Right ventricle myocardium inferior (tissue), 1 donor: ENCODE measurements at regions of chrX and their contacts with region 1.

Region 1: DNA sequence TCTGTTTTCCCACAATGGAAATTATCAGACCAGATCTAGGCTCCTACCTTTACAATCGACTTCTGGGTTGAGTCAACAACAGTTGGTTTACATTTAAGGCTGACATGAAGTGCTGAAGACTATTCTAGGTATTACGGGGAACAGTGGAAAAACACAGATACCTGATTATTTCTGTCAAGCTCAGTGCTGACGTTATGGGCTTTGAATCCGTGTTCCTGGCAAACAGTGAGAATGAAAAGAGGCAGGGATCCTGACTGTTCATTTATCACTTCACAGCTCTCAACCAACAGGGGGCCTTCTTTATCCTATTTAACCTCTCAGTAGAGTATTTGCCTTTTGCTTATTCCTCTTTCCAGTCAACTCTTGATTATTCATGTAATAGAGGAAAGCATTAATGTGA is 43.1 kb downstream of the TMEM164 start:
- DNase-seq: no peak
- ATAC-seq: peak; percentile 43

Region 2: DNA sequence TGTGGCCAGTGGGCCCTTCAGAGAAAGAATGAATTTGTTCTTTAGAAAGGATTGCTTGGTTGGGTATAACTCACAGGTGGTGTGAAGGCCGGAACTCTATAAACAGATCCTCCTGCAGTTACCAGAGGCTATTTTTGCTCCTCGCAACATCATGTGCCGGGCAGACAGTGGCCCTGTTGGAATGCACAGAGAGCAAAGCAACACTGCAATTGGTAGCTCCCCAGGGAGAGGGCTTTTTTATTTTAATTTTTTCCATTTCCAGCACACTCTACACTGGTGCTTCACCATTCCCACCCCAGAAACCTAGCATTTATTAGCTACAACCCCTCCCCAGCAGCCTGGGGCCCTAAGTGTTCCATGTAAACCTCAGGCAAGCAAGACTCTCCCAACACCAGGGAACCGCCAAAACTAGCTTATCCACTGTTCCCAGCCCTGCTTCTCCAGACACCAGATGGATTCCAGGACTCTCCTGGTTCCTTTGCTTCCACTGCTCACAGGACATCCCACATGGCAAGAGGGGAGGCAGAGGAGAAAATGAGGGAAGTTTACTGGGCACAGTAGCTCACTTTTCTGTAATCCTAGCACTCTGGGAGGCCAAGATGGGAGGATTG is 118.2 kb before region 1 on chrX:
- intact Hi-C with region 1: loop called (anchors 5 kb)
- DNase-seq: no peak
- ATAC-seq: peak; percentile 78

Region 3: DNA sequence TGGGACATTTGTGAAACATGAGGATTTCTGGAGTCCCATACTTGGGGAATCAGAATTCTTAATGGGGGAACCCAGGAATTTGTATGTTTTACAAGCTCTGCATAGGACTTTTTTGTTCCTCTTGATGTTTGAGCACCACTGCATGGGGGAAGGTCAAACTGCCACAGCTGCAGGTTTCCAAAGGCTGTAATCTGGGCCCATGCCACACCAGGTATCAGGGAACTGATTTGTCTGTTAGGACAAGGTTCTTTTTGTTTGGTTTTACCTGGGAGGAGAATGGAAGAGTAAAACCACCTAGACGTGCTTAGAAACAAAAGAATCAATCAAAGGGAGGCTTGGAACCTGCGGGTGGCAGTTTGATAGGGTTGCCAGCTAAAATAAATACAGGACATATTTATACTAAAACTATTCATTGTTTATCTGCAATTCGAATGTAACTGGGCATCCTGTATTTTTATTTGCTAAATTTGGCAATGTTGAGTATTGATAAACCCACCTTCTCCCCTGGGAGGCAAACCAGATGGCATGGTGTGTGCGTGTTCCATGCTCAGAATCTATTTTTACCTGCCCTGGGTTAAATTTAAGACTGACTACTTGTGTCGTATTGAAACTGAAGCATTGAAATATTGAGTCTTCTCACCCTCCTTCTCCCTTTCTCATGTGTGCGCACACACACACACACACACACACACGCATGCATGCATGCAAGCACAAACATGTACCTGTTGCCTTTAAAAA is 20.7 kb after region 1 on chrX:
- intact Hi-C with region 1: no loop called
- DNase-seq: no peak
- ATAC-seq: peak; percentile 59